ENCODE measurements at regions of chr2 and their contacts with region 1.

Region 1: GRCh38 chr2:45643543-45644542 is 7.6 kb upstream of the PRKCE start:
- DNase-seq: peak; percentile 90

Region 2: GRCh38 chr2:44836174-44836573 is 807.7 kb before region 1 on chr2:
- intact Hi-C with region 1: no loop called
- DNase-seq: no peak

Region 3: DNA sequence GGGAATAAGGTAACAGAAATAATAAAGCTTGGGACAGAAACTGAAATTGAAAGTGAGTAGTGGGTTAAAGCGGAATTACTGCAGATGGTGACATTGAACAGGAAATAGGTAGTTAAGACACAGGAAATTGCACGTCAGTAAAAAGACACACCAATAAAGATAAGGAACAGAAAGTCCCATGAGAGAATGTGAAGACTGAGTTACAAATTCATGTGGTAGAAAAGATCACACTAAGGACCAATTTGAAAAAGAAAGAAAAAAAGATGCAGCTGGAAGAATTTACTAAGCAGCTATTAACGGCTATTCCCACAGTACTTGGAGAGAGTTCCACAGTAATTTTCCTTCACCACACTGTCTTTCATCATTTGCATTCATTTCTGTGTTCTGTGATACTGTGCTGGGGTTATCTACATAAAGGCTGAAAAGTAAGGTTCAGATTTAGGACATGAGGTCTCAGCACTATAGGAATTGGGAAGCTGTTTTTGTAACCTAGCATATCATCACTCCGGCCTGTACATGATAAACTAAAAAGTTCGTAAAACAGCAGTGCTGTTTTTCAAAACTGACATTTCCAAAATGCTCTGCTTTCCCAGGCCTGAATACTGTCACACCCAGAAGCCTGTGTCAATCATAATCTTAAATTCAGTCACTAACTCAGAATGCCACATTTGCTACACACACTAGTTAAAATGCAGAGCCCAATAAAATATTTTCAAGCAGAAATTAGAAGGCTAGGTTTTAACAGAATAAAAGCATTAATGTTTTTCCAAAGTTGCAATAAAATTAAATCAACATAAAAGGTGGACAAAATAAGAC is 75.7 kb before region 1 on chr2:
- intact Hi-C with region 1: no loop called
- DNase-seq: no peak

Region 4: GRCh38 chr2:45681675-45682074 is 37.8 kb after region 1 on chr2:
- intact Hi-C with region 1: no loop called
- DNase-seq: no peak

Region 5: GRCh38 chr2:45696708-45697107 is 52.9 kb after region 1 on chr2:
- intact Hi-C with region 1: no loop called
- DNase-seq: no peak

Region 6: DNA sequence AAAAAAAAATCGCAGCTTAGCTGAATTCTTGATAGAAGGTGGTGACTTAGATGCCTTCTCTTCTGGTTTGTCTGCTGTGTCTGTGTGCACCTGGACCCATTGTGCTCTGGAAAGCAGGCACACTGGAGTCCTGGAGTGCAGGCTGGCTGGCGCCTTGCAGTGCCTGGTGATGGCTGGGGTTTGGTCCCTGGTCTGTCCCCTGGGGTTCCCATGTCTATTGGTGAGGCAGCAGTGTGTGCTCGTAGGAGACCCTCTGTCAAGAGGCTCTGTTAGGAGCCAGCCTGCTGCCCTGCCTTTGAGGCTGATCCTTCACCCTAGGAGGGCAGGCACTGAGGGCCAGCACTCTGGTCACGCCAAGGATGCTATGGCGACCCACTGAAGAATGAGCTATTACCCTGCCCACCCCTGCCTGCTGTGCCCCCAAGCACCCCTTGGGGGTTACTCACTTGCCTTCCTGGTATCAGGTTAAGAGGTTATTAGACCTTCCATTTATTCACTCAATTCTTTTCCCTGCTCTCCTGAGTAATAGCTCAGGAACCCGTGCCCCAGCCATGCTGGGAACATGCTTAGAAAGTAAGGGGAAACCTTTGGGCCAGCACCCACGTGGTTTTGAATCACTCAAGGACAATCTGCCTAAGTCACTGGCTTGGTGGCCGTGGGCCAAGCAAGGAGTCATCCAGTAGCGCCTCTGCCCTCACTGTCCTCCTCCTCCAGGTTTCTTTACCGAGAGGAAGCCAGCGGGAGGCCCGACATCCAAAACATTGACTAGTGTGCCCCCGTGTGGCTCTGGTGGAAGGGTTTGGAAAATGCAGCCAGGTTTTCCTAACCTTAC is 292.2 kb after region 1 on chr2:
- intact Hi-C with region 1: loop called (anchors 2 to 5 kb)
- DNase-seq: peak; percentile 98